ENCODE measurements at regions of chr16 and their contacts with region 1.

Region 1: DNA sequence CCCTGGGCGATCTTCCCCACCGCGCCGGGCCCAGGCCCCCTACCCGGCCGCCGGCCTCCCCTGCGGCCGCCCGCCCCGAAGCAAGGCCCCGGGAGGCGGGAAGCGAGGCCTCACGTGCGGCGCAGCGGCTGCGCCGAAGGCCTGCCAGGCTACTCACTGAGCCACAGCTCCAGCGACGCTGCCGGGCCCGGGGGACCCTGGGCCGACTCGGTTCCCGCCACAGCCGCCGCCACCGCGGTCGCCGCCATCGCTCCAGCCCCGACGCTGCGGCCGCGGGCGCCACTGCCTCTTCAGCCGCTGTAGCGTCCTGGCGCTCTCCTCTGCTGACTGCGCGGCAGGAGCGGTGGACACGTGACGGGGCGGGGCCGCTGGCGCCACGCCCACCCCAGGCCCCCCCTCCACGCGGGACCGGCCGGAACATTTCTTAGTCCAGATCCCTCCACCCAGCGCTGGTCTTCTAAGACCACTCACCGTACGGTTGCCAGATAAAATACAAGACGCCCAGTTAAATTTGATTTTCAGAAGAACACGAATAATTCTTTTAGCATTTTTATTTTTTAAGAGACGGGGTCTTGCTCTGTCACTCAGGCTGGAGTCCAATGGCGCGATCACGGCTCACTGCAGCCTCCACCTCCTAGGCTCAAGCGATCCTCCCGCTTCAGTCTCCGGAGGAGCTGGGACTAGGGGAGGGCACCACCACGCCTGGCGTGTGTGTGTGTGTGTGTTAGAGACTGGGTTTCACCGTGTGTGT is at the start of gene GGA2:
- DNase-seq: peak; percentile 86
- H3K4me3 ChIP-seq: peak within 1 kb of the TSS; percentile 99
- H3K27ac ChIP-seq: peak within 1 kb of the TSS; percentile 92
- H3K4me1 ChIP-seq: peaks cover 59% of the 10 kb centered on the region
- H3K27me3 ChIP-seq: no peaks in the 10 kb centered on the region
- CTCF ChIP-seq: peak; percentile 8
- total RNA-seq, gene GGA2: 59.4 TPM

Region 2: DNA sequence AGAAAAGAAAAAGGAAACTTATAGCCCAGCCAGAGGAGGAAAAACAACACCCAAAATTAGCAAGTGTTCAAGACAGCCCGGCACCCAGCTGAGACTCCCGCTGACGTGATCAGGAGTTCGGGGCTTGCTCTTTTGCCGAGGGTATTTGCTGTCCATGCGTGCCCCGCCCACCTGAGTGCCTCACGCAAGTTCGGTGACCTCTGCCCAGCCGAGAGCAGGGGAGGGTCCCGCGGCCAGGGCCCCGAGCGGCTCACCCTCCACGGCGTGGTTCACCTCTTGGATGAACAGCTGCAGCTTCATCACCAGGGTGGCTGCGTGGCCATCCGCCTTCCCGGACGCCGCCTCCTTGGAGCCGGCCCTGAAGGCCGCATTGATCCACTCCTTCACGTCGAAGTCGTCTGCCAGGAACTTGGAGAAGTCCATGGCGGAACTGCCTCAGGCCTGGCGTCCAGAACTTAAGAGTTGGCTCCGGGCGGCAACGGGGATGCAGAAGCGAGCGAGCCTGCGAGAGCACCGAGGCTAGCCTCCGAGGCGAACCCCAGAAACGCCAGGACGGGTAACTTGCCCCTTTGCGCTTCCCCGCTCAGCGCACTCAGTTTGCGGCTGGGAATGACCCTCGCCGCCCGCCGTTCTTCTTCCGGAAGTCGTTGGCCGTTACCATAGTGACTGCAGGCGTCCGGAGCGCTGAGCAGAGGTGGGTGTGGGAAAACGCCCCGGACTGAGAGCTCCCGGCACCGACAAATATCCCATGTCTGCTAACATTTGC is 57.6 kb before region 1 on chr16 and contains the start of gene COG7:
- intact Hi-C with region 1: loop called (anchors 10 kb)
- DNase-seq: peak; percentile 90
- H3K4me3 ChIP-seq: peak within 1 kb of the TSS; percentile 80
- H3K27ac ChIP-seq: peak within 1 kb of the TSS; percentile 88
- H3K4me1 ChIP-seq: peaks cover 37% of the 10 kb centered on the region
- H3K27me3 ChIP-seq: no peaks in the 10 kb centered on the region
- CTCF ChIP-seq: no peak
- total RNA-seq, gene COG7: 11.7 TPM

Region 3: GRCh38 chr16:23896832-23897821 is 386.8 kb after region 1 on chr16:
- intact Hi-C with region 1: no loop called
- DNase-seq: no peak
- H3K4me3 ChIP-seq: no peak overlapping the region
- H3K27ac ChIP-seq: no peak overlapping the region
- H3K4me1 ChIP-seq: no peaks in the 10 kb centered on the region
- H3K27me3 ChIP-seq: peaks cover 37% of the 10 kb centered on the region
- CTCF ChIP-seq: no peak

Measured in left ventricle myocardium inferior (tissue), 1 donor.